ENCODE measurements at regions of chr12 and their contacts with region 1.

Region 1: DNA sequence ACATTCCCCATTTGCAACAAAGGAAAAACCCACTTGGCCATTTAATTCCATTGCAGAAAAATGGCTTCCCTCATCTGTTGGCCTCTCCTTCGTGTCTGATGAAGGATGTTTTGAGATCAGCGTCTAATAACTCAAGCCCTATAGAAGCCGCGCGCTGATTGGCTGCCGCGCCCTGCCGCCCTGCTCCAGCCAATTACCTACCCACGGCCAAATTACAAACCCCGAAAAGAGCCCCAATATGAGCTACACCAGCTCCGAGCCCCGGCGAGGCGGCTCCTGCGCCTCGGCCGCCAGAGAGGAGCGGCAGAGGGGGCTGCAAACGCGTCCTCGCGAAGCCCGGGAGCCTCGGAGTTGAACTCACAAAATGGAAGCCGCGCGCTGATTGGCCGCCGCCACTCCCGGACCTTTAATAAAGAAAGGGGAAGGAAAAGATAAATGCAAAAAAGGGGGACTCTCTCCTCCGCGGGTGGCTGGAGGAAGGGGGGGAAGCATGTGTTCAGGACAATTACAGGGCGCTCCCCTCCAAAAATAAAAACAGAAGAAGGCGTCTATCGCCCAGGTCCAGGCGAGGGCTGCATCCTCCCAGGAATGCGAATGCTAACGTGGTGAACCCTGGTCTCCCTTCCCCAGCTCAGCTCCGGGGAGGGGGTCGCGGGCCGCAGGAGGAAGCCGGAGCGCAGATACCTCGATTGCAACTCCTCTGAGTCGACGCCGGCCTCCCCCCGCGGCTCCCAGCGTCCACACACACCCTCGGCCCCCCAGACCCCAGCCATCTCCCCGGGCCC is 771 bp upstream of the SETD1B start:
- DNase-seq: peak; percentile 88
- ATAC-seq: peak; percentile 66
- H3K4me3 ChIP-seq: peak overlapping the region; percentile 66
- H3K27ac ChIP-seq: peak overlapping the region; percentile 97
- H3K4me1 ChIP-seq: peaks cover 27% of the 10 kb centered on the region
- H3K27me3 ChIP-seq: no peaks in the 10 kb centered on the region
- CTCF ChIP-seq: no peak
- EP300 ChIP-seq: no peak
- POLR2A ChIP-seq: peak; percentile 89
- RAD21 ChIP-seq: no peak

Region 2: GRCh38 chr12:121786441-121786825 is 16.6 kb before region 1 on chr12:
- CTCF ChIA-PET with region 1: interaction called, 565 read pairs
- POLR2A ChIA-PET with region 1: interaction called, 155 read pairs
- RAD21 ChIA-PET with region 1: interaction called, 395 read pairs
- SMC1A ChIA-PET with region 1: interaction called, 226 read pairs
- in situ Hi-C with region 1: no loop called
- intact Hi-C with region 1: no loop called
- DNase-seq: no peak
- ATAC-seq: no peak
- H3K4me3 ChIP-seq: no peak overlapping the region
- H3K27ac ChIP-seq: peak overlapping the region; percentile 90
- H3K4me1 ChIP-seq: peaks cover 82% of the 10 kb centered on the region
- H3K27me3 ChIP-seq: no peaks in the 10 kb centered on the region
- CTCF ChIP-seq: no peak
- EP300 ChIP-seq: no peak
- POLR2A ChIP-seq: no peak
- RAD21 ChIP-seq: no peak

Region 3: GRCh38 chr12:121888478-121889266 is 85.6 kb after region 1 on chr12 and contains the start of gene PSMD9:
- CTCF ChIA-PET with region 1: interaction called, 90 read pairs
- POLR2A ChIA-PET with region 1: interaction called, 11 read pairs
- RAD21 ChIA-PET with region 1: interaction called, 12 read pairs
- SMC1A ChIA-PET with region 1: interaction called, 6 read pairs
- in situ Hi-C with region 1: loop called (anchors 5 kb)
- intact Hi-C with region 1: no loop called
- DNase-seq: peak; percentile 90
- ATAC-seq: peak; percentile 98
- H3K4me3 ChIP-seq: peak within 1 kb of the TSS; percentile 89
- H3K27ac ChIP-seq: peak within 1 kb of the TSS; percentile 84
- H3K4me1 ChIP-seq: peaks cover 5% of the 10 kb centered on the region; the same call in 1 of the 2 replicates
- H3K27me3 ChIP-seq: no peaks in the 10 kb centered on the region
- CTCF ChIP-seq: peak; percentile 68 to 73 (median 69)
- EP300 ChIP-seq: 0 out of 4 replicates have a peak, but pooled peaks of 1 of the 2 experiments have one; percentile 17
- POLR2A ChIP-seq: peak; percentile 98
- RAD21 ChIP-seq: peak; percentile 64
- polyA plus RNA-seq, gene PSMD9: 14.6 to 33.7 TPM